ENCODE measurements at regions of chr5 and their contacts with region 1.

Region 1: DNA sequence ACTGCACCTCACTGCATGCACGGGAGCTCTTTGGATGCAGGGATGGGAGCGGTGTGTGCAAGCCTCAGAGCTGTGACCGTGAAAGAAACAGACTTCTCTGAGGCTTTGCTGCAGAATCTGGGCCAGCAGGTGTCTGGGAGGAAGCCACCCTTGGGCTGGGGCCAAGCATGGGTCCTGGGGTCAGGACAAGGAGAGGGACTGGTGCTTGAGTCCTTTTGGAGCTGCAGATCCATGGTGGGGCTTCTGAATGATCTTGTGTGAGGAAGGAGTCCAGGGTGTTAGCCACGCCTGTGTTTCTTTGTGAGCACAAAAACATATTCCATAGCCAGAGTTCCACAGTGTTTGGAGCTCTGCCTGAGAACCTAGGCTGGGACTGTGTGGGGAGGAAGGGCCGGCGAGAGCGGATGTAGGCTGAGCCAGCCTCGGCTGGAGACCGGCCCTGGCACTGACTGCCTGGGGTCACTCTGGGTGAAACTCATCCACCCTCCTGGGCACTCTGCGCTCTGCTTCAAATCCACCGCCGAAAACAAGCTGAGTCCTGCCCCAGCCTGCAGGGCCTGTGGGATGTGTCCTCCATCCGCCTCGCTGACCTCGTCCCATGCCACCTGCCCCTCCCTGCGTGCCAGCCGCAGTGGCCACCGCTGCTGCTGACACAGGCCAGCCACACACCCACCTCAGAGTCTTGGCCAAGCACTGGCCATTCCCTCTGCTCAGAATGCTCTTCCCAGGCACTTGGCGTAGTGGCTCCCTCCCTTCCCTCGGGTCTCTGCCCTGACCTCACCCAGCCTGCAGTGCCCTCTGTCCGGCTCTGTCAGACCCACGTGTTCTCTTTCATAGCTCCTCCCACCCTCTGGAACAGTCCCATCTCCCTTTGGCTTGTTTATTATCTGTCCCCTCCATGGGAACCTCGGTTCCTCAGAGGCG is 26.7 kb downstream of the ERGIC1 start:
- DNase-seq: no peak
- ATAC-seq: peak; percentile 8 to 23; a peak in 3 of 6 replicates
- H3K4me3 ChIP-seq: no peak overlapping the region
- H3K27ac ChIP-seq: peak overlapping the region; percentile 96 to 99
- H3K4me1 ChIP-seq: peaks cover 99% of the 10 kb centered on the region
- CTCF ChIP-seq: no peak
- EP300 ChIP-seq: no peak
- POLR2A ChIP-seq: no peak
- RAD21 ChIP-seq: no peak

Region 2: GRCh38 chr5:172839669-172840431 is 20.9 kb before region 1 on chr5:
- CTCF ChIA-PET with region 1: interaction called, 10 read pairs
- POLR2A ChIA-PET with region 1: no interaction called
- DNase-seq: no peak
- ATAC-seq: no peak
- H3K4me3 ChIP-seq: no peak overlapping the region
- H3K27ac ChIP-seq: peak overlapping the region; percentile 20 to 69
- H3K4me1 ChIP-seq: peaks cover 72% of the 10 kb centered on the region
- CTCF ChIP-seq: no peak
- EP300 ChIP-seq: no peak
- POLR2A ChIP-seq: no peak
- RAD21 ChIP-seq: no peak

Measured in A549 (cell line).